K562 (cell line): ENCODE measurements at regions of chr9 and their contacts with region 1.

Region 1: DNA sequence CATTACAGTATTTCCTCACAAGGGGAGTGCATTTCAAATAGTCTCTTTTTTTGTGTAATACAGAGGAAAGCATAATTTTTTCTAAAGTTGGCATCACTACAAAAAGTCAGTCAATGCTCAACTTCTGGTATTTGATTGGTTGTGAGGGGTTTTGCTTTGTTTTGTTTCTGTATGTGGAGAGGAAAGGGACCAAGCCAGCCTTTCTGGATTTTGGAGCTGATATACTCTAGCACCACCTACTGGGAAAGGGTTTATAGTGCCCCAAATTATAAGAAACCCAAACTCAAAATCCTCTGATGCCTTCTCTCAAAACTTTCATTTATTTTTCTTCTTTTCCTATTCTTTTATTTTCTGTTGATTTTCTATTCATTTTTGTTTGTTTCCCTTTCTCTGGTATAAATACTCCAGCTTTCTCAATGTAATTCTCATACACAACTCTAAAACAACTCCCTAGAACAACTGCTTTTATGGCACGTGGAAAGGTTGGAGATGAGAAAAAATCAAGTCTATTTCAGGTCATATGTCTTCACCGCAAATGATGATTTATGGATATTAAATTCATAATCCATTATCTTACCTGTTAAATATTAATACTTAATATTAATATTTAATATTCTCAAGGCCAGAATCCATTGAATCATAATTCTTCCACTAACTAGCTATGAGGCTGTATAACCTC is 69.5 kb upstream of the ANXA1 start:
- DNase-seq: peak; percentile 13 to 64 (median 33)
- ATAC-seq: peak; percentile 70; the same call in 2 of the 3 replicates
- H3K4me3 ChIP-seq: no peak overlapping the region
- H3K27ac ChIP-seq: no peak overlapping the region
- H3K4me1 ChIP-seq: no peaks in the 10 kb centered on the region; a peak in 1 of 5 replicates
- H3K27me3 ChIP-seq: no peaks in the 10 kb centered on the region
- CTCF ChIP-seq: peak; percentile 54 to 77 (median 66)
- EP300 ChIP-seq: no peak
- POLR2A ChIP-seq: no peak
- RAD21 ChIP-seq: peak; percentile 86 to 87

Region 2: GRCh38 chr9:72960446-72960845 is 121.7 kb before region 1 on chr9:
- CTCF ChIA-PET with region 1: no interaction called
- POLR2A ChIA-PET with region 1: no interaction called
- in situ Hi-C with region 1: no loop called
- intact Hi-C with region 1: loop called (anchors 5 kb)
- DNase-seq: no peak
- ATAC-seq: peak; percentile 76
- H3K4me3 ChIP-seq: no peak overlapping the region
- H3K27ac ChIP-seq: no peak overlapping the region
- H3K4me1 ChIP-seq: no peaks in the 10 kb centered on the region; a peak in 1 of 5 replicates
- H3K27me3 ChIP-seq: no peaks in the 10 kb centered on the region
- CTCF ChIP-seq: peak in 2 of 3 experiments; percentile 8 to 23; a peak in 2 of 6 replicates
- EP300 ChIP-seq: no peak
- POLR2A ChIP-seq: no peak
- RAD21 ChIP-seq: peak in 1 of 2 experiments; percentile 50; a peak in 2 of 4 replicates